Calu3 (cell line): ENCODE measurements at regions of chr6 and their contacts with region 1.

Region 1: GRCh38 chr6:105757512-105758200 is 328.5 kb upstream of the PRDM1 start:
- DNase-seq: no peak
- H3K4me3 Mint-ChIP-seq: no peak overlapping the region
- H3K27ac Mint-ChIP-seq: peak overlapping the region; percentile 86
- H3K4me1 Mint-ChIP-seq: peaks cover 63% of the 10 kb centered on the region
- H3K27me3 Mint-ChIP-seq: no peaks in the 10 kb centered on the region
- CTCF ChIP-seq: no peak

Region 2: GRCh38 chr6:105714846-105715245 is 42.8 kb before region 1 on chr6:
- CTCF ChIA-PET with region 1: no interaction called
- intact Hi-C with region 1: no loop called
- DNase-seq: no peak
- H3K4me3 Mint-ChIP-seq: no peak overlapping the region
- H3K27ac Mint-ChIP-seq: no peak overlapping the region
- H3K4me1 Mint-ChIP-seq: no peaks in the 10 kb centered on the region
- H3K27me3 Mint-ChIP-seq: no peaks in the 10 kb centered on the region
- CTCF ChIP-seq: no peak

Region 3: DNA sequence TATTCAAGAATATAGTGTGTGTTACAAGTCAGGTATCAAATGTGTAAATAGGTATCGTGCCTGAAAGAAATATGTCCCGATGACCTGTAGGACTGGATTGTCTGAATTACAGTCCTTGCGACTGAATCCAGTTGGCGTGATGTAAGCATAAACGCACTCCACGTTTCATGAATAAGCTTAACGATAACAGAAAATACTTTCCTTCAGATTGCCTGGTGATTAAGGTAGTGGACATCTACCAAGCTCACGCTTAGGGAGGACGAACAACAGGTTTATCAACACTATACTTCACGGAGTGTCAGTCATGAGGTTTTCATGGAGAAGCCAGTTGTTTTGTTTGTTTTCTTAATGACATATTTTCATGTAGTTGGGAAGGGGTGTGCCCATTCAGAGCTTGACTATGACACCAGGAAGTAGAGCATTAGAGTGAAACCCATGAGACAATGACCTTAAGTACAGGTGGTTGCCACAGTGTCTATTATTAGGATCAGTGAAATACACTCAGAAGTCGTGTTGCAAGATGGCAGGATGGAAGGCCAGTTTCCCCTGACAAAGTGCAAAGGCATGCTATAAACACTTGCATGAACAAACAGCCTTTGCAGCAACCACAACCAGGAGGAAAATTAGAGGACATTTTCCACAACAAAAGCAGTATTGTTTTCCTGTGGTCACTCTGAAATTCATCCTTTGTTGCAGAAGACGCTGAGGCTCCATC is 22.6 kb after region 1 on chr6:
- CTCF ChIA-PET with region 1: no interaction called
- intact Hi-C with region 1: no loop called
- DNase-seq: peak; percentile 30
- H3K4me3 Mint-ChIP-seq: no peak overlapping the region
- H3K27ac Mint-ChIP-seq: peak overlapping the region; percentile 73
- H3K4me1 Mint-ChIP-seq: peaks cover 44% of the 10 kb centered on the region
- H3K27me3 Mint-ChIP-seq: no peaks in the 10 kb centered on the region
- CTCF ChIP-seq: no peak

Region 4: DNA sequence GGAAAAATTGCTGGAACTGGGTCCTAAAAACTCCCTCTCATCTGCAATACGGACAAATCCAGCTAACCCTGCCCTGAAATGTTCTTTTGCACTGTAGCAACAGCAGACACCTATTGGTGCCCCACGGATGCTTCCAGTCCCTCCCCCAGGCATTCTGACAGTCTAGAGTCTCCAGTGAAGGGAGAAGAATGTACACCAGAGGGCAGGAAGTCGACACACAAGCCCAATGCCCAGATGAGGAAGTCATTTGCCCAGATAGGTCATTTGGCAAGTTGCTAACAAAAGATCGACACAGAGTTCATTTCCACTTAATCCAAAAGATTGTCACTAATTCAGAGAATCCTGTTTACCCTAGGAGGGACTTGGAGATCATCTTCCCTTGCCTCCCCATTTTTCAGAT is 35.5 kb after region 1 on chr6:
- CTCF ChIA-PET with region 1: no interaction called
- intact Hi-C with region 1: loop called (anchors 5 kb)
- DNase-seq: peak; percentile 43
- H3K4me3 Mint-ChIP-seq: no peak overlapping the region
- H3K27ac Mint-ChIP-seq: peak overlapping the region; percentile 44
- H3K4me1 Mint-ChIP-seq: peaks cover 56% of the 10 kb centered on the region
- H3K27me3 Mint-ChIP-seq: no peaks in the 10 kb centered on the region
- CTCF ChIP-seq: no peak

Region 5: GRCh38 chr6:105824732-105825131 is 67.1 kb after region 1 on chr6:
- CTCF ChIA-PET with region 1: no interaction called
- intact Hi-C with region 1: no loop called
- DNase-seq: no peak
- H3K4me3 Mint-ChIP-seq: no peak overlapping the region
- H3K27ac Mint-ChIP-seq: no peak overlapping the region
- H3K4me1 Mint-ChIP-seq: no peaks in the 10 kb centered on the region
- H3K27me3 Mint-ChIP-seq: no peaks in the 10 kb centered on the region
- CTCF ChIP-seq: no peak

Region 6: GRCh38 chr6:105880030-105880492 is 122.4 kb after region 1 on chr6:
- CTCF ChIA-PET with region 1: no interaction called
- intact Hi-C with region 1: loop called (anchors 5 kb)
- DNase-seq: no peak
- H3K4me3 Mint-ChIP-seq: no peak overlapping the region
- H3K27ac Mint-ChIP-seq: no peak overlapping the region
- H3K4me1 Mint-ChIP-seq: peaks cover 31% of the 10 kb centered on the region
- H3K27me3 Mint-ChIP-seq: peaks cover 10% of the 10 kb centered on the region
- CTCF ChIP-seq: no peak